PC-9 (cell line): ENCODE measurements at regions of chr5 and their contacts with region 1.

Region 1: GRCh38 chr5:72988769-72989168 is 32.9 kb downstream of the FCHO2 start:
- DNase-seq: no peak
- H3K4me3 ChIP-seq: no peak overlapping the region
- H3K27ac ChIP-seq: no peak overlapping the region
- H3K4me1 ChIP-seq: no peaks in the 10 kb centered on the region
- H3K27me3 ChIP-seq: no peaks in the 10 kb centered on the region
- CTCF ChIP-seq: no peak

Region 2: DNA sequence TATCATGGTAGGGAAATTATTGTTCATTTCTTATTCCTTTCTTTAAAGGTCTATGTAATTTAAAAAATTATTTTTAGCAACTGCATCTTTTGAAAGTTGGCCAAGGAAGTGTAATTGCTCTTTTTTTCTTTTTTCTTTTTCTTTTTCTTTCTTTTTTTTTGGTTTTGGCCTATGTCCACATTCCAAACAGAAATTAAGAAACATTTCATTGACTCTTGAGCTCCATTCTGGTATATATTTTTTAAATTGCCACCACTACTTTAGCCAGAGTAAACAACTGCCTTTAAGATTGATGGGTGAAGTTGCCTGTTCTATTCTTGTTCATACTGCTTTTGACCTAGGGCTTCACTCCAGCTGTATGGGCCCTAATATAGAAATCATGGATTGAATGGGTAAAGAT is 55.8 kb after region 1 on chr5:
- CTCF ChIA-PET with region 1: no interaction called
- POLR2A ChIA-PET with region 1: interaction called, 16 read pairs
- intact Hi-C with region 1: no loop called
- DNase-seq: no peak
- H3K4me3 ChIP-seq: no peak overlapping the region
- H3K27ac ChIP-seq: no peak overlapping the region
- H3K4me1 ChIP-seq: no peaks in the 10 kb centered on the region
- H3K27me3 ChIP-seq: no peaks in the 10 kb centered on the region
- CTCF ChIP-seq: no peak